Caco-2 (cell line): ENCODE measurements at regions of chr1 and their contacts with region 1.

Region 1: DNA sequence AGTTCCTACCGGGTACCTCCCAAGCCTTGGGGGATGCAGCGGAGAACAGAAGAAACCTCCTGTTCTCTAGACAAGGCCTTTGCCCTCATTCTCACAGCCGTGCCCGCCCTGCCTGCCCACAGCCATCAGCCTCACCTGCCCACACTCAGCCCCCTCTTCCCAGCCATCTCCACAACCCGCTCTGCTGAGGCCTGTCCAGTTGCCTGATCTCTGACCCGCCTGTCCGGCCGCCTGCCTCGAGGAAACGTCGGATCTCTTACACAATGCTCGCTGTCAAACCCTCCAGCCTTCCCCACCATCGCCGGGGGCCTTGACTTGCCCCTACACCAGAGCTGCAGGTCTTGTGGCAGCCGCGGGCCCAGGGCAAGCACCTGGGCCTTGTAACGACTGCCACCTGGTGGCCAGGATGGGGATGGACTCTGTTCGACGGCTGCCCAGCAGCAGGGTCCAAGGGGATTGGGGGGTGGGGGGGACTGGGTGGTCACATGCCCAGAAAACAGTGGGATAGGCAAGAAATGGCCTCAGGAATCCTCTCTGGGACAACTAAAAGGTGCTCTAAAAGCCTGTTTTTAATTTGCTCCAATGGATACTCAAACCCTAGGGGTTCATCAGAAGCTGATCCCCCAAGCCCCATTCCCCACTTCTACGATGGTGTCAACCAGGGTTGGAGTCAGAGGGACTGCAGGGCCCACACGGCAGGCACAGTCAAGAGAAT is 31.0 kb downstream of the SLC45A1 start:
- DNase-seq: peak; percentile 65 to 75
- H3K4me3 ChIP-seq: no peak overlapping the region
- H3K4me3 Mint-ChIP-seq: no peak overlapping the region
- H3K27ac Mint-ChIP-seq: peak overlapping the region; percentile 16
- H3K4me1 ChIP-seq: no peaks in the 10 kb centered on the region
- H3K4me1 Mint-ChIP-seq: peaks cover 6% of the 10 kb centered on the region
- H3K27me3 ChIP-seq: no peaks in the 10 kb centered on the region
- H3K27me3 Mint-ChIP-seq: no peaks in the 10 kb centered on the region
- CTCF ChIP-seq: peak; percentile 84

Region 2: GRCh38 chr1:7975212-7975865 is 373.6 kb before region 1 on chr1:
- CTCF ChIA-PET with region 1: interaction called, 7 read pairs
- POLR2A ChIA-PET with region 1: no interaction called
- intact Hi-C with region 1: loop called (anchors 1 kb)
- DNase-seq: peak; percentile 82 to 91
- H3K4me3 ChIP-seq: no peak overlapping the region
- H3K4me3 Mint-ChIP-seq: no peak overlapping the region
- H3K27ac Mint-ChIP-seq: peak overlapping the region; percentile 38
- H3K4me1 ChIP-seq: no peaks in the 10 kb centered on the region
- H3K4me1 Mint-ChIP-seq: peaks cover 7% of the 10 kb centered on the region
- H3K27me3 ChIP-seq: no peaks in the 10 kb centered on the region
- H3K27me3 Mint-ChIP-seq: no peaks in the 10 kb centered on the region
- CTCF ChIP-seq: peak; percentile 86 to 97

Region 3: GRCh38 chr1:7983086-7983778 is 365.7 kb before region 1 on chr1:
- CTCF ChIA-PET with region 1: interaction called, 3 read pairs
- POLR2A ChIA-PET with region 1: no interaction called
- intact Hi-C with region 1: loop called (anchors 2 kb)
- DNase-seq: no peak
- H3K4me3 ChIP-seq: no peak overlapping the region
- H3K4me3 Mint-ChIP-seq: no peak overlapping the region
- H3K27ac Mint-ChIP-seq: no peak overlapping the region
- H3K4me1 ChIP-seq: peaks cover 11% of the 10 kb centered on the region; the same call in 1 of the 2 replicates
- H3K4me1 Mint-ChIP-seq: peaks cover 7% of the 10 kb centered on the region
- H3K27me3 ChIP-seq: no peaks in the 10 kb centered on the region
- H3K27me3 Mint-ChIP-seq: no peaks in the 10 kb centered on the region
- CTCF ChIP-seq: no peak

Region 4: GRCh38 chr1:8015036-8015808 is 333.7 kb before region 1 on chr1:
- CTCF ChIA-PET with region 1: interaction called, 18 read pairs
- POLR2A ChIA-PET with region 1: no interaction called
- intact Hi-C with region 1: loop called (anchors 1 kb)
- DNase-seq: peak in 1 of 2 experiments; percentile 65
- H3K4me3 ChIP-seq: no peak overlapping the region
- H3K4me3 Mint-ChIP-seq: no peak overlapping the region
- H3K27ac Mint-ChIP-seq: no peak overlapping the region
- H3K4me1 ChIP-seq: peaks cover 55% of the 10 kb centered on the region
- H3K4me1 Mint-ChIP-seq: peaks cover 46% of the 10 kb centered on the region
- H3K27me3 ChIP-seq: no peaks in the 10 kb centered on the region
- H3K27me3 Mint-ChIP-seq: no peaks in the 10 kb centered on the region
- CTCF ChIP-seq: peak; percentile 44 to 52

Region 5: GRCh38 chr1:8373581-8374241 is 24.8 kb after region 1 on chr1:
- CTCF ChIA-PET with region 1: no interaction called
- POLR2A ChIA-PET with region 1: no interaction called
- intact Hi-C with region 1: no loop called
- DNase-seq: no peak
- H3K4me3 ChIP-seq: no peak overlapping the region
- H3K4me3 Mint-ChIP-seq: no peak overlapping the region
- H3K27ac Mint-ChIP-seq: no peak overlapping the region
- H3K4me1 ChIP-seq: 0 out of 2 replicates have a peak, but pooled peaks cover 5% of the 10 kb centered on the region
- H3K4me1 Mint-ChIP-seq: peaks cover 4% of the 10 kb centered on the region
- H3K27me3 ChIP-seq: no peaks in the 10 kb centered on the region
- H3K27me3 Mint-ChIP-seq: no peaks in the 10 kb centered on the region
- CTCF ChIP-seq: no peak